AG04449 (cell line): ENCODE measurements at regions of chr5 and their contacts with region 1.

Region 1: DNA sequence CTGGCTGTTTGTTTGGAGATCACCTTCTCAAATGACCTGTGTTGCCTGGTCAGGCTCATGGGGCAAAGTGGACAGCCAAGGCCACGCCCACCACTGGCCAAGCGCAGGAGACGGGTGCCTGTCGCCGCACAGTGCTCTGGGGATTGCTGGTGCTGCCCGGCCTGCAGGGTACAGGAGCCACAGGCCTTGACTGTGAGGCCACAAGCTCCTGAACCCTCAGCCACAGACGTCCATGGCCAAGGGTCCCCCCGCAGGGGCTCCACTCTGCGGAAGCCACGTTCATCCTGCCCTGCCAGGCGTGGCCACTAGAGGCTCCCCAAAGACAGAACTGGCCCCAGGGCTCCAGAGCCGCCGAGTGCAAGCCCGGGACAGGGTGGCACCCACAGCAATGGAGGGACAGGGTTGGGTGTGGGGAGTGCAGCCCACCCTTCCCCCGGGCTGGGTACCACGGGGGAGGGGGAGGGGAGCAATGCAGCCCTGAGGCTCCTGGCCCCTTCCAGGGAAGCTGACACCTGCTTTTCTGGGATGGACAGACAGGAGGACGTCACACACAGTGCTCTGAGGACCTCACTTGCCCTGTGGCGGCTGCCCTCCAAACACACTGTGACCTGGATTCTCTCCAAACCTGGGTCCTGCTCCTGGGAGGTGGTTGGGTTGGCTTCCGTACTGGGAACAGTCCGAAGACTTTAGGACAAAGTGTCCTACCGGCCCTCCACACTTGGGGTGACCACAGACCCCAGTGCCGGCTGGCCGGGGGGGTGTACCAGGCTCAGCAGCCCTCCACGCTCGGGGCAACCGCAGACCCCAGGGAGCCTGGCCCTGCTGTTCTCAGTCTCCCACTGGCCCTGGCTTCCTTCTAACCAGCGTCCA is 21.5 kb downstream of the TPPP start:
- DNase-seq: no peak
- H3K4me3 ChIP-seq: peak overlapping the region; percentile 41
- CTCF ChIP-seq: peak; percentile 97

Region 2: DNA sequence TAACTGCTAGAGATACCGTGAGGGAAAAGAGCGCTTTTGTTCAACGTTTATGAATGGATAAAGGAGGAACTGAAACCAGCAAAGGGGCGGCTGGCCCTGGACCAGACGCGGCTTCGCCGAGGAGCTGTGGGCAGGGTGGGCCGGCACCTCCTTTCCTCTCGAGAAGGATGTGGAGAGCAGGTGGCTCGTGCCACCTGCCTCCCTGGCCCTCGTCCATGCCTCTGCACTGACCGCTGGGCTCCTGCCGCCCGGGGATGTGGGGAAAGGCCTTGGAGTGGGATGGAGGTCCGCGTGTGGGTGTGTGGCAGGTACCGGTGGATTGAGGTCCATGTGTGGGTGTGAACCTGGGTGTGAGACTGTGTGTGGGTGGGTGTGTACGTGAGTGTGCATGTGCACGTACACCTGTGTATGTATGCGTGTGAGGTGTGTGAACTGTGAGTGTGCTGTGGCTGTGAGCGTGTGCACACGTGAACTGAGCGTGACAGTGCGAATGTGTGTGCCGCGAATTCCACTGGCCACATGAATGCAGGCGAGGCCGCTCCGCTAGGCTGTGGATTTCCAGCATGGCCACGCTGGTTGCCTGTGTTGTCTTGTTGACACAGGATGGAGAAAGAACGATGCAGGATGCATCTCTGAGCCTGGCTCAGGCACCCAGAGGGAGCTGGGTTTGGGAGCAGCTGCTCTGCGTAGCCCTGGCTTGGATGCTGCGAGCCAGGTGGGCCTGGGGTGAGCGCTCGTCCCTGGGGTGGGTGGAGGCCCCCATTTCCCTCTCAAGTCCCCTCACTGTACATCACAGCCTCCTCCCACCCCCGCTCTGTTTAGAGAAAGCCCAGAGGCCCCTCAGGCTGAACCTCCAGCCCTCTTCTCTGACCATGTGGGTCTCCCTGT is 63.9 kb before region 1 on chr5:
- CTCF ChIA-PET with region 1: no interaction called
- POLR2A ChIA-PET with region 1: no interaction called
- DNase-seq: no peak
- H3K4me3 ChIP-seq: no peak overlapping the region
- CTCF ChIP-seq: no peak

Region 3: GRCh38 chr5:657570-657969 is 14.1 kb before region 1 on chr5:
- CTCF ChIA-PET with region 1: interaction called, 58 read pairs
- POLR2A ChIA-PET with region 1: no interaction called
- DNase-seq: peak; percentile 21
- H3K4me3 ChIP-seq: no peak overlapping the region
- CTCF ChIP-seq: no peak

Region 4: GRCh38 chr5:892394-893136 is 220.9 kb after region 1 on chr5 and contains the starts of genes BRD9 and TRIP13:
- CTCF ChIA-PET with region 1: interaction called, 18 read pairs
- POLR2A ChIA-PET with region 1: no interaction called
- DNase-seq: no peak
- H3K4me3 ChIP-seq: peak within 1 kb of the TSS; percentile 95
- CTCF ChIP-seq: no peak

Region 5: DNA sequence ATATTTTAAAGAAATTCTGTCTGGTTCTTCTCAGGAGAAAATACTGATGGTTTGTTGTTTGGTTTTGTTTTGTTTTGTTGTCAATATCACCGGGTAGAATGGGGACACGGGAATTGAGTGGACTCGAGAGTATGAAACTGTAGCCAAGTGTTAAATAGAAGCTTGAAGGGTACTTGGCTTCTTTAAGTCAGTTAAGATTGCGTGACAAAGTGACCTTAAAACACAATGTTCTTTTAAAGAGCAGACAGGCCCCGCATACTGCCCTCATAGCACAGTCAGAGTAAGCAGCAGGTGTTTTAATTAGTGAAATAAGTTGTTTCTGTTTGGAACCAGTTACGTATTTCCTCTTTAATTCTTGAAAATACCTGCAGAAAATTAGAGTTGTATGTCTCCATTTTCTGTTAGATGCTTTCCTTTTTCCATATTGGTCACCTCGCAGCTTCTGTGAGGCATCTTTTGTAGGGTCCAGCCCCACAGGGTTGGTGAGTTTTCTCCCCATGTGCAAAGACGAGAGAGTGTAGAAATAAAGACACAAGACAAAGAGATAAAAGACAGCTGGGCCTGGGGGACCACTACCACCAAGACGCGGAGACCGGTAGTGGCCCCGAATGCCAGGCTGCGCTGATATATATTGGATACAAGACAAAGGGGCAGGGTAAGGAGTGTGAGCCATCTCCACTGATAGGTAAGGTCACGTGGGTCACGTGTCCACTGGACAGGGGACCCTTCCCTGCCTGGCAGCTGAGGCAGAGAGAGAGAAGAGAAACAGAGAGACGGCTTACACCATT is 230.6 kb after region 1 on chr5:
- CTCF ChIA-PET with region 1: interaction called, 138 read pairs
- POLR2A ChIA-PET with region 1: interaction called, 3 read pairs
- DNase-seq: no peak
- H3K4me3 ChIP-seq: no peak overlapping the region
- CTCF ChIP-seq: no peak